IMR-90 (cell line): ENCODE measurements at regions of chr17 and their contacts with region 1.

Region 1: GRCh38 chr17:29369831-29370735 is 20.1 kb upstream of the TAOK1 start:
- DNase-seq: peak; percentile 85
- ATAC-seq: peak; percentile 96
- H3K4me3 ChIP-seq: peak overlapping the region; percentile 36; the same call in 1 of the 2 replicates
- H3K27ac ChIP-seq: no peak overlapping the region
- H3K4me1 ChIP-seq: no peaks in the 10 kb centered on the region
- H3K27me3 ChIP-seq: no peaks in the 10 kb centered on the region
- CTCF ChIP-seq: peak; percentile 74
- POLR2A ChIP-seq: peak; percentile 42; the same call in 1 of the 2 replicates
- RAD21 ChIP-seq: peak; percentile 73

Region 2: GRCh38 chr17:29347831-29348629 is 22.1 kb before region 1 on chr17:
- CTCF ChIA-PET with region 1: interaction called, 15 read pairs
- POLR2A ChIA-PET with region 1: no interaction called
- dilution Hi-C with region 1: no loop called
- in situ Hi-C with region 1: no loop called
- intact Hi-C with region 1: no loop called
- DNase-seq: no peak
- ATAC-seq: no peak; the same call in 1 of the 2 replicates
- H3K4me3 ChIP-seq: no peak overlapping the region
- H3K27ac ChIP-seq: no peak overlapping the region
- H3K4me1 ChIP-seq: no peaks in the 10 kb centered on the region
- H3K27me3 ChIP-seq: peaks cover 6% of the 10 kb centered on the region
- CTCF ChIP-seq: no peak
- POLR2A ChIP-seq: no peak
- RAD21 ChIP-seq: no peak

Region 3: DNA sequence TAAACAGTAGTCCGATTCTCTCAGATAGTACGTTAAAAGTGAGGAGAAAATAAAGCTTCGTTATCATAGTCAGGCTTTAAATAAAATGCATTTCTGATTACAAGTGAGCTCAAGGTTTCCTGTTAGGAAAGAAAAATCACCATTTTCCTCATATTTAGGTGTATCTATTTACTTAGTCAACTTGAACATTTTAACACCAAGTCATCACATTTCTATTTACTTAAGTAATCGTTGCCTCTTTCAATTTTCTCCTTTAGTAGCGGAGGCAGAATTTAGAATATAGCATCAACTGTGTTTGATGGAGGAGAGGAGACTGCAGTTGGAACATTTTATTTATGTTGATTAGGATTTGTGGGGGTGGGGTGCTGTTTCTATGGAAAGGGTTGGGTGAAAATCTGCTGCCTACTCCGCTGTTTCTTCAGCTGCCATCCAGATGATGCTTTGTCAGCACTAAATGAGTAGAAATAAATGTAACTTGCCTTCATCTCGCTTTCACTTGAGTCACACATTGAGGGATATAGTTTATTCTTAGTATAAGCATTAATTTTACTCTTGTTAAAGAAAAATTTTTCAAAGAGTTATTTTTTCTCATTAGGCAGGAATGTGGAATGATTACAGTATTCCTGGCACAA is 154.5 kb after region 1 on chr17:
- CTCF ChIA-PET with region 1: interaction called, 12 read pairs
- POLR2A ChIA-PET with region 1: interaction called, 3 read pairs
- dilution Hi-C with region 1: no loop called
- in situ Hi-C with region 1: no loop called
- intact Hi-C with region 1: no loop called
- DNase-seq: no peak
- ATAC-seq: no peak
- H3K4me3 ChIP-seq: no peak overlapping the region
- H3K27ac ChIP-seq: no peak overlapping the region
- H3K4me1 ChIP-seq: no peaks in the 10 kb centered on the region
- H3K27me3 ChIP-seq: no peaks in the 10 kb centered on the region
- CTCF ChIP-seq: no peak
- POLR2A ChIP-seq: no peak
- RAD21 ChIP-seq: no peak

Region 4: DNA sequence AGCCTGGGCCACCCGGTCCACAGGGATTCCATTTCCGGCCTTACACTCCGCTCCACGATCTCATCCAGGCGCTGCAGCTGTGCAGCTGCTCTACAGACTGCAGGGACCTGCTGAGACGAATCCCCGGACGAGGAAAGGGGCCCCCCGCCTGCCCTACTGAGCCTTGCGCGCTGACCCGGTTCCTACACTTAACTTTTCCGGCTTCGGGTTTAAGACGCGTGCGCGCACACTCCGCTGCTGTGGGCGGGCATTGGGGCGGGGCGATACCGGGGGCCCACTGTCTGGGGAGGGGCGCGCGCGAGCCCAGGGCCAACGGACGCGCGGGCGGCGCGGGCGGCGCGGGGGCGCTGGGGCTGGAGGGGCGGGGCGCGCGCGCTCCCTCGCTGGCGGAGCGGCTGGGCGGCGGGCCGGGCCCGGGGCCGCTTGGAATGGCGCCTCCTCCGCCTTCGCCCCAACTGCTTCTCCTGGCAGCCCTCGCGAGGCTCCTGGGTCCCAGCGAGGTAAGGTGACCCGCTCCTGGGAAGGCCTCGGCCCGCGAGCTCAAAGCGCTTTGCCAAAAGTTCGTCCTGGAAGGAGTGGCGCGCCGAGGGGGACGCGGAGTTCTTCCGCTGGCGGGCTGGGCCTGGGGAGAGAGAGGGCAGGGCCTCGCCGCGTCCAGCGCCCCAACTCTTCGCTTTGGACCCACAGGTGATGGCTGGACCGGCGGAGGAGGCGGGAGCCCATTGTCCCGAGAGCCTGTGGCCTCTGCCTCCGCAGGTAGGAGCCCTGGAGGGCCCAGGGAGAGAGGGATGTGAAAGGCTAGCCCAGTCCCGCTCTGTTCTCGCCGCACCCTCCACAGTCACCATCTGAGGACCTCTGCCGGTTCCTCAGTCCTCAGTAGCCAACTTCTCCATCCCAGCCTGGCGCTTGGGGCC is 198.5 kb after region 1 on chr17 and contains the start of gene TP53I13:
- CTCF ChIA-PET with region 1: interaction called, 13 read pairs
- POLR2A ChIA-PET with region 1: no interaction called
- dilution Hi-C with region 1: no loop called
- in situ Hi-C with region 1: no loop called
- intact Hi-C with region 1: loop called (anchors 1 kb)
- DNase-seq: peak; percentile 68
- ATAC-seq: peak; percentile 71
- H3K4me3 ChIP-seq: peak within 1 kb of the TSS; percentile 97
- H3K27ac ChIP-seq: peak within 1 kb of the TSS; percentile 88
- H3K4me1 ChIP-seq: peaks cover 11% of the 10 kb centered on the region
- H3K27me3 ChIP-seq: no peaks in the 10 kb centered on the region
- CTCF ChIP-seq: no peak
- POLR2A ChIP-seq: 0 out of 2 replicates have a peak, but pooled peaks have one; percentile 30
- RAD21 ChIP-seq: no peak
- total RNA-seq, gene TP53I13: 18.3 and 22.0 TPM in 2 replicates

Region 5: GRCh38 chr17:29825604-29826003 is 455.5 kb after region 1 on chr17:
- CTCF ChIA-PET with region 1: no interaction called
- POLR2A ChIA-PET with region 1: interaction called, 13 read pairs
- dilution Hi-C with region 1: no loop called
- in situ Hi-C with region 1: no loop called
- intact Hi-C with region 1: no loop called
- DNase-seq: no peak
- ATAC-seq: no peak
- H3K4me3 ChIP-seq: no peak overlapping the region
- H3K27ac ChIP-seq: no peak overlapping the region
- H3K4me1 ChIP-seq: no peaks in the 10 kb centered on the region
- H3K27me3 ChIP-seq: no peaks in the 10 kb centered on the region
- CTCF ChIP-seq: no peak
- POLR2A ChIP-seq: no peak
- RAD21 ChIP-seq: no peak